Lower lobe of right lung (tissue), 2 donors: ENCODE measurements at regions of chr10 and their contacts with region 1.

Region 1: DNA sequence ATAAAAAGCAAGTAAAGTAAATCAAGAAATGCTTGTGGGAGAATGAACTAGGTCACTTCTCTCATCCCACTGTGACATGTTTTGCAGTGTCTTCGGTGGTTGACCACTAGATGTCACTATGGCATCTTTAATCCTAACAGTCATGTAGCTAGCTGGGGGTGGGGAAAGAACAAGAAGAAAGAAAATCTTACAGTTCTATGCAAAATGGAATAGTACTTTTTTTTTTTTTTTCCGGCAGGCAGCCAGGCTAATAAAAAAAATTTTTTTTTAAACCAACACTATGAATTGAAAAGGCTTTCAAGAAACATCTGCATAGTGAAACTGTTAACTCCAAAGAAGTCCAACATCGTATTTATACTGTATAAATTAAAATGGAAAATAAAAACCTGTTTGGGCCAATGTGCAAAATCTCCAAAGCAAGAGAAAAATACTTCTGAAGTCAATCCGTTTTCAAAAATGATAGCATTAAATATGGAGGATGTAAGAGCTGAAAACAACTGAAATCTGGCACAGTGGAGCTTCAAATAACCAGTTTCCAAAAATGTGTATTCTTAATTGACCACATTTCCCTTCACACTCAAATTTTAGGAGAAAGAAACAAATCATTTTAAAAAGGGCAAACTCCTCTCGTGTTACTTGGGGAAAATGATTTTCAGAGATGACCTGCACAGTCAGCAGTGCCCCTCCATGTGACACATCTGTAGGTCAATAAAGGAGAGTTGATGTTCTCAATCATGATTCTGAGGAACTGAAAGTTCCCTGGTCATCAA is 38.5 kb downstream of the CDK1 start:
- DNase-seq: no peak
- ATAC-seq: peak; percentile 88 to 94
- H3K4me3 ChIP-seq: peak overlapping the region; percentile 14
- H3K27ac ChIP-seq: peak overlapping the region; percentile 9
- H3K4me1 ChIP-seq: peaks cover 13% of the 10 kb centered on the region
- H3K27me3 ChIP-seq: no peaks in the 10 kb centered on the region
- CTCF ChIP-seq: peak; percentile 83

Region 2: DNA sequence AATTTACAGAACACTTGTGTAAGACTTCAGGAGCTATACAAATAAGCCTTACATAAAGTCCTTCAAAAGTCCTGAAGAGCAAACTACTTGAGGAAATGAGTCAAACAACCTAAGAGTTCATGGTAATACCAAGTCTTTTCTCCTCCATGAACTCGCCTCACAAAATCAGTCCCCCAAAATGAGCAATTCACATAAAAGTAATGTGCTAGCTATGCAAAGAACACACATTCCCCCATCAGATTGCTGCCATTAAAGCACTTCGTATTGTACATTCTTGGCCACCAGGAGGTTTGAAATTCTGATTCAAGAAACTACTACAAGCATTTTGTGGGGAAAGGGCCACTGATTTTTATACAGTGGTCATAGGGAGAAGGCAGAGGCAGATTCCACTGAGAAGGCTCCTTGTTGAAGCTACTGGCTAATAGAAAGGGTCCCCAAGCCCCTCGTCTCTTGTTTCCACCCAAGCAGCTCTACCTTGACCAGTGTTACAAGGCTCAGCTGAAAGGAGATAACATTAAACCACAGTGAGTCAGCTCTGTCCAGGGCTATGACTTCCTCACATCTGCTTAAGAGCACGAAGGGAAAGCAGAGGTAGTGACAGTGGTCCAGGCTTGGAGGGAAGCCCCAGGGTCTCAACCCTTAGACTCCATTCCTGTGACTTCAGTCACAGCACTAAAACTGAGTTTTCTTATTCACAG is 153.7 kb before region 1 on chr10:
- intact Hi-C with region 1: no loop called
- DNase-seq: no peak
- ATAC-seq: peak; percentile 83 to 88
- H3K4me3 ChIP-seq: no peak overlapping the region
- H3K27ac ChIP-seq: peak overlapping the region; percentile 64
- H3K4me1 ChIP-seq: peaks cover 12% of the 10 kb centered on the region
- H3K27me3 ChIP-seq: no peaks in the 10 kb centered on the region
- CTCF ChIP-seq: no peak

Region 3: GRCh38 chr10:60728056-60728455 is 88.8 kb before region 1 on chr10:
- intact Hi-C with region 1: no loop called
- DNase-seq: no peak
- ATAC-seq: no peak
- H3K4me3 ChIP-seq: no peak overlapping the region
- H3K27ac ChIP-seq: no peak overlapping the region
- H3K4me1 ChIP-seq: no peaks in the 10 kb centered on the region
- H3K27me3 ChIP-seq: peaks cover 3% of the 10 kb centered on the region
- CTCF ChIP-seq: no peak

Region 4: DNA sequence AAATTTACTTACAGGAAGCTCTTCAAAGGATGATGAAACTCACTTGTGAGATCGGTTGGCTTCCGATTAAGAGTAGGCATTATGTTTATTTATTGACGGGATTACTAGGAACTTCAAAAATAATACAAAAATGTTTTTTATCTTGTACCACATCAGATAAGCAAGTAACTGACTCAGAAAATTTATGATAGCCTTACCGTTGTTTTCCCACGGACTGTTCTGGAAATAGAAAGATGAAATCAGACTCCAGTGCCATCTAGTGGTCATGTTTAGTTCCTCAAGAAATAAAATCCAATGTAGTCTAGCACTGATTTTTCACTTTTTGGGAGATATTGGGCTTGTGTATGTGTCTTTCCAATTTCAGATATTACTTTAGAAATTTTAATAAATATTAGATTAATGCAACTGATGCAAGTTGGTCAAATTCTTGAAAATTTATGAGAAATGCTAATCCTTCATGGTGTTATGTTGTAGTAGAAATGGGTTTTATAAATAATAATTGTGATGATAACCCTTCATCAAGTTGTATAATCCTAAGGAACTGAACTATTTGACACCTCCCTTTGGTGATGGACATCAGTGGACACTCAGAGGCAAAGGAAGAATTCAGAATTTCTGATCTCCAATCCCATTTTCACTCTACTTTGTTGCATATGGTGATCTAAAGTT is 467.5 kb after region 1 on chr10:
- intact Hi-C with region 1: loop called (anchors 10 kb)
- DNase-seq: no peak
- ATAC-seq: peak; percentile 56 to 80
- H3K4me3 ChIP-seq: peak overlapping the region; percentile 15
- H3K27ac ChIP-seq: peak overlapping the region; percentile 0
- H3K4me1 ChIP-seq: peaks cover 15% of the 10 kb centered on the region
- H3K27me3 ChIP-seq: no peaks in the 10 kb centered on the region
- CTCF ChIP-seq: peak; percentile 76